ENCODE measurements at regions of chr22 and their contacts with region 1.

Region 1: DNA sequence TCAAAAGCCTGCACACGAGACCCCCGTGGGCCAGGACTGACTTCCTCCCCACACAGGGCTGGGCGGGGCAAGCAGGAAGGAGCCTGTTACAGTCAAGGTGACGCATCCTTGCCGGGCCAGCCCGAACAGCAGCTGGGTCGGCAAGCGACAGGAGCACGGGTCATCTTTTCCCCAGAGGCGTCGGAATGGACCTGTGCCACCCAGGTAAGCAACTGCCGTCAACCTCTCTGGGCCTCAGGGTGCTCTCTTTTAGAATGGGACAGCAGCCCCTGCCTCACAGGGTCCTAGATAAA is at the start of gene CYTH4:
- DNase-seq: peak; percentile 34 to 88 (median 82)
- ATAC-seq: peak; percentile 76
- H3K4me3 ChIP-seq: peak within 1 kb of the TSS; percentile 84 to 98
- H3K4me3 Mint-ChIP-seq: peak within 1 kb of the TSS; percentile 89
- H3K27ac ChIP-seq: peak within 1 kb of the TSS; percentile 82 to 84
- H3K27ac Mint-ChIP-seq: peak within 1 kb of the TSS; percentile 98
- H3K4me1 ChIP-seq: peaks cover 45% of the 10 kb centered on the region
- H3K4me1 Mint-ChIP-seq: peaks cover 60% of the 10 kb centered on the region
- H3K27me3 ChIP-seq: no peaks in the 10 kb centered on the region
- H3K27me3 Mint-ChIP-seq: no peaks in the 10 kb centered on the region
- CTCF ChIP-seq: no peak
- total RNA-seq, gene CYTH4: 129 to 143 TPM

Region 2: DNA sequence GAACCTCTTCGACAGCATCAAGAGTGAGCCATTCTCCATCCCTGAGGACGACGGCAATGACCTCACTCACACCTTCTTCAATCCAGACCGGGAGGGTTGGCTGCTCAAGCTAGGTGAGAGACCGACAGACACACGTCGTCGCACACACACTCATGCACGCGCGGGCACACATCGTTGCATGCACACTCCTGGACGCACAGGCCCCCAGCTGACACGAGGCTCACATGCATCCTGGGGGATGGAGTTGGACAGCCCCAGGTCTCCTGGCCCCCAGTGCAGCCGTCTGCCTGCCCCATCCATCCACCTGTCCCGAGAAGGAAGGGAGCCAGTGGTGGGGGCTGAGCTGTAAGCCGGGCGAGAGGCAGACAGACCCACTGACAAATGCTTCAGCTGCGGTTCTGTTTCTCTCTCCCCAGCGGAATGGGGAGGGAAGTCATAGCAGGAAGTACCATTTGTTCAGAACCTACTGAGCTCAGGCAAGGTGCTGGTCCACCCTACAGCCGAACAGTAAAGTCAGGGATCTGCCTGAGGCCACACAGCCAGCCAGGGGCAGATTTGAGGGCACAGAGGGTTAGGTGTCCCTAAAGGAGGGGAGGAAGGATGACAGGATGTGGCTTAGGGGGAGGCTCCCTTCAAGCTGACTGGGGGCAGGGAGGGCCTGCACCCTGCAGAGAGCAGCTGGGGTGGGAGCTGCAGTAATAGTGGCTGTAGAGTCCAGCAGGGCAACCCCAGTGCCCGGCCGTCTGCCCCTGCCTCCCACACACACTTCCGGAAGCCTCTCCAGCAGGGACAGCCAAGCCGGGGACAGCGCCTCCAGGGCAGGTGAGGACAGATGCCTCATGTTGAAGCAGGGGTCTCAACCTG is 27.1 kb after region 1 on chr22:
- CTCF ChIA-PET with region 1: interaction called, 5 read pairs
- POLR2A ChIA-PET with region 1: interaction called, 14 read pairs
- intact Hi-C with region 1: no loop called
- DNase-seq: peak in 8 of 9 experiments; percentile 40 to 84 (median 70)
- ATAC-seq: peak; percentile 50
- H3K4me3 ChIP-seq: peak overlapping the region; percentile 7 to 42
- H3K4me3 Mint-ChIP-seq: peak overlapping the region; percentile 60
- H3K27ac ChIP-seq: peak overlapping the region; percentile 39 to 51
- H3K27ac Mint-ChIP-seq: peak overlapping the region; percentile 99
- H3K4me1 ChIP-seq: peaks cover 72% of the 10 kb centered on the region
- H3K4me1 Mint-ChIP-seq: peaks cover 86% of the 10 kb centered on the region
- H3K27me3 ChIP-seq: no peaks in the 10 kb centered on the region
- H3K27me3 Mint-ChIP-seq: no peaks in the 10 kb centered on the region
- CTCF ChIP-seq: no peak

Region 3: DNA sequence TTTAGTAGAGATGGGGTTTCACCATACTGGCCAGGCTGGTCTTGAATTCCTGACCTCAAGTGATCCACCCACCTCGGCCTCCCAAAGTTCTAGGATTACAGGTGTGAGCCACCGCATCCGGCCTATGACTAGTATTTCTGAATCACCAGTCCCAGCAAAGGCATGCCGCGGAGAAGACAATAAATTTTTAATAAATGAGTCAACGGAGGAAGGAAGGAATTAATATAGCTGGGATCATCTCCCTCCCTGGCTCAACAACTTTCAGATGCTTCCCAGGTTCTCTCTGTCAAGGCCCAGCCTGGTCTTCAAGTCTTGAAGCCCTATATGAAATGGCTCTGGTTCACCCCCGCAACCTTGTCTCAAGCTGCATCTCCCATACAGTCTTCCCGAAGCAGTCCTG is 45.7 kb after region 1 on chr22:
- CTCF ChIA-PET with region 1: no interaction called
- POLR2A ChIA-PET with region 1: no interaction called
- intact Hi-C with region 1: no loop called
- DNase-seq: no peak
- ATAC-seq: no peak
- H3K4me3 ChIP-seq: no peak overlapping the region
- H3K4me3 Mint-ChIP-seq: no peak overlapping the region
- H3K27ac ChIP-seq: no peak overlapping the region
- H3K27ac Mint-ChIP-seq: no peak overlapping the region
- H3K4me1 ChIP-seq: peaks cover 13% of the 10 kb centered on the region
- H3K4me1 Mint-ChIP-seq: no peaks in the 10 kb centered on the region
- H3K27me3 ChIP-seq: peaks cover 12 to 30% of the 10 kb centered on the region in 2 experiments
- H3K27me3 Mint-ChIP-seq: peaks cover 49% of the 10 kb centered on the region
- CTCF ChIP-seq: no peak

Region 4: DNA sequence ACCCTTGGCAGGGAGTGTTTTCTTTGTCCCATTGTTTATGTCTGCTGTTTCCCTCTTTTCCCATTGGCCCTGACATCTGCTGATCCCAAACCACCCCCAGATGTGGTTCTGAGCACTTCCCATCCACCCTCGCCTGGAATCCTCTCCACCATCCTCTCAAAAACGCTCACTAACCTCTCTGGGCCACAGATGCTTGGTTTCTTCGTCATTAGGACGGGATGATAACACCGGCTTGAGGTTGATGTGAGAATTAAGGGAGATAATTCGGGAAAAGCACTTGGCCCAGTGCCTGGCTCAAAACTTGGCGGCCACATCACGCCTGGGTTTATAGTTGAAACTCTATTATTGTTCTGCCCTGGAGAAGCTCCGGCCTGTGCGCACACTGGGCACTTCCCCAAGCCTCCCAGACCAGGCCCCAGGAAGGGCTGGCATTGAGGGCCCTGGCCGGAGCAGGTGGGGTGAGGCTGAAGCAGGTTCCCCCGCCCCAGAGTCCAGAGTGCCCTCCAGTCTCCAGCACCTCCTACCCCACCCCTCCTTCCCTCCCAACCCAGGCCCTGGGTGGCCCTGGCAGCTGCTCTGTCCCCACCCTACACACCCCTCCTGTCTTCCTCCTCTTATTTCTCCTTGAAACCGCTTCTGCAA is 63.7 kb after region 1 on chr22:
- CTCF ChIA-PET with region 1: no interaction called
- POLR2A ChIA-PET with region 1: no interaction called
- intact Hi-C with region 1: no loop called
- DNase-seq: no peak
- ATAC-seq: no peak
- H3K4me3 ChIP-seq: no peak overlapping the region
- H3K4me3 Mint-ChIP-seq: no peak overlapping the region
- H3K27ac ChIP-seq: no peak overlapping the region
- H3K27ac Mint-ChIP-seq: no peak overlapping the region
- H3K4me1 ChIP-seq: peaks cover 10% of the 10 kb centered on the region
- H3K4me1 Mint-ChIP-seq: peaks cover 5% of the 10 kb centered on the region
- H3K27me3 ChIP-seq: no peaks in the 10 kb centered on the region
- H3K27me3 Mint-ChIP-seq: peaks cover 3% of the 10 kb centered on the region
- CTCF ChIP-seq: no peak